Activated naive CD4-positive, alpha-beta T cell treated with anti-CD3 and anti-CD28 coated beads for 36 hours (primary cell): ENCODE measurements at regions of chr6 and their contacts with region 1.

Region 1: GRCh38 chr6:106163966-106164877 is 78.1 kb downstream of the PRDM1 start:
- DNase-seq: peak; percentile 80
- H3K4me3 Mint-ChIP-seq: peak overlapping the region; percentile 36
- H3K27ac Mint-ChIP-seq: peak overlapping the region; percentile 78
- H3K4me1 Mint-ChIP-seq: peaks cover 35% of the 10 kb centered on the region
- H3K27me3 Mint-ChIP-seq: peaks cover 2% of the 10 kb centered on the region

Region 2: DNA sequence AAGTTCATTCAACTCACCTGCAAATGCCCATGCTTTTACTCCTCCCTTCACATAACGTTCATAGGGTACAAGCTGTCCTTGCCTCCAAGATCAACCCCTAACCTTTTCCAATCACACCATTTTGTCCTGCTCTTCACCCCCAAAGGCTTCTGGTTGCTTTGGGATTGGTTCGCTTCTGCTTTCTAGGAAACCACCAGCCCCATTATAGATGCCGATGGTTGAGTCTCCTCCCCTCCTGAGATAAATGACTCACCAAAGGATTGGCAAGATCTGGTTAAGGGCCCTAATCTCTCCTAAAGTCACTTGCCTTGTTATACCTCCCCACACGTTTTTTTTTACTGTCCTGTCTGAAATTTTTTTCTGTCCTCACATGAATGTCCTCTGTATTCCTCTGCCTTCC is 1615.9 kb before region 1 on chr6:
- CTCF ChIA-PET with region 1: no interaction called
- intact Hi-C with region 1: no loop called
- DNase-seq: no peak
- H3K4me3 Mint-ChIP-seq: no peak overlapping the region
- H3K27ac Mint-ChIP-seq: no peak overlapping the region
- H3K4me1 Mint-ChIP-seq: no peaks in the 10 kb centered on the region
- H3K27me3 Mint-ChIP-seq: peaks cover 23% of the 10 kb centered on the region

Region 3: GRCh38 chr6:106103728-106104109 is 60.5 kb before region 1 on chr6:
- CTCF ChIA-PET with region 1: interaction called, 3 read pairs
- intact Hi-C with region 1: loop called (anchors 1 kb)
- DNase-seq: peak; percentile 63
- H3K4me3 Mint-ChIP-seq: peak overlapping the region; percentile 20
- H3K27ac Mint-ChIP-seq: peak overlapping the region; percentile 1
- H3K4me1 Mint-ChIP-seq: peaks cover 57% of the 10 kb centered on the region
- H3K27me3 Mint-ChIP-seq: peaks cover 4% of the 10 kb centered on the region

Region 4: GRCh38 chr6:106141441-106142237 is 22.6 kb before region 1 on chr6:
- CTCF ChIA-PET with region 1: interaction called, 7 read pairs
- intact Hi-C with region 1: loop called (anchors 1 kb)
- DNase-seq: peak; percentile 75
- H3K4me3 Mint-ChIP-seq: peak overlapping the region; percentile 13
- H3K27ac Mint-ChIP-seq: peak overlapping the region; percentile 83
- H3K4me1 Mint-ChIP-seq: peaks cover 31% of the 10 kb centered on the region
- H3K27me3 Mint-ChIP-seq: no peaks in the 10 kb centered on the region

Region 5: GRCh38 chr6:106152952-106153351 is 11.3 kb before region 1 on chr6:
- CTCF ChIA-PET with region 1: no interaction called
- intact Hi-C with region 1: no loop called
- DNase-seq: no peak
- H3K4me3 Mint-ChIP-seq: no peak overlapping the region
- H3K27ac Mint-ChIP-seq: no peak overlapping the region
- H3K4me1 Mint-ChIP-seq: peaks cover 22% of the 10 kb centered on the region
- H3K27me3 Mint-ChIP-seq: no peaks in the 10 kb centered on the region

Region 6: DNA sequence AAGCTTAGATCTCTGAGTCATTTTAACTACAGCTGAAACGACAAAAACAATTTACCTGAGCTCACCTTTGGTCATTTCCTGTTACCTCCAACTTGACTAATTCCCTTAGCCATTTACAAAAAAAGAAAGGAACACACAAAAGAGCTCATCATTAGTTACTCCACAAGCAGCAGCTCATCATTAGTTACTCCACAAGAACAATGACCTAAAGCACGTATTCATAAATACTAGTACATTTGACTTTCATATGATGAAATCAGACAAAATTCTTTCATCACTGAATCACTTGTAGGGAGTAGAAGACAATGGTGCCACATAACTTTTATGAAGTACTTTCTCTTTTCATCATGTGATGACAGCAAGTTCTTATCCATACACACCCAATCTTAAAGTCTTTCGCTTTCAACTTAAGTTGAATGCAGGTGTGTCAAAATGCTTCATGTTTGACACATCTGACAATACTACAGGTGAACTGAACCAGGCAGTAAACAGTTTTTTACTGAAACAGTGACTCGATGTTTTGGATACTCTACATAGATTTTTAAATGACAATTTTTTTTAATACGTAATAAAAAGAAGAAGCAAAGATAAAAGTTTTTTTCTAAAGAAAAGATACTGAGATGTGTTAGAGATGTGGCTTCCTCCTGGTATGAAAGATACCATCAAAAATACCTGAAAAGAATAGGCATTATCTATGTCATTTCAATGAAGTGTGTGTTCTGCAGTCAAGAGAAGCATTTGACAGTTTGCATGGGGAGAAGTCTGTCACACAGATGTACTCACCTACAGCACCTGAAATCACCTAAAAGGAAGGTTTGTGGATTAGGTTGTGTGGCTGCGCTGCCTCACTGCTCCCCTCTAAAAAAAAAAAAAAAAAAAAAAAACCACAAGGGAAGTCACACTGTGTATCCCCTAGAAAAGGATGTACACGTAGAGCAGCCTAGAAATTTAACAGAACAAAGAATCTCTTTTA is 31.0 kb after region 1 on chr6:
- CTCF ChIA-PET with region 1: no interaction called
- intact Hi-C with region 1: loop called (anchors 1 kb)
- DNase-seq: no peak
- H3K4me3 Mint-ChIP-seq: peak overlapping the region; percentile 59
- H3K27ac Mint-ChIP-seq: peak overlapping the region; percentile 88
- H3K4me1 Mint-ChIP-seq: peaks cover 38% of the 10 kb centered on the region
- H3K27me3 Mint-ChIP-seq: no peaks in the 10 kb centered on the region